Head of caudate nucleus (tissue), 42 donors: ENCODE measurements at regions of chr3 and their contacts with region 1.

Region 1: DNA sequence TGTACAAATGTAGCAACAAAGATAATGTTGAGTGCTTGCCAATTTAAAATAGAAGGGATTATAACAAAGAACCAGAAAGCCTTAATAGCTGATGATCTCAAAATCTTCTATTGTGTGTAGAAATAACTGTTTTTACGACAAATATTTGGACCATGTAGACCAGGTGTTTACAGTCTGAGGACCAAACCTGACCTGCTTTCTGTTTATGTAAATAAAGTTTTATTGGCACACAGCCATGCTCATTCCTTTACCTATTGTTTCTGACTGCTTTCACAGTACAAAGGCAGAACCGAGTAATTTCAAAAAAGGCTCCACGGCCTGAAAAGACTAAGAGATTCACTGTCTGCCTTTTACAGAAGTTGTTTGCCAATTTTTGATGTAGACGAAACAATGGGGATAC is 91.8 kb downstream of the GOLIM4 start:
- DNase-seq: no peak

Region 2: DNA sequence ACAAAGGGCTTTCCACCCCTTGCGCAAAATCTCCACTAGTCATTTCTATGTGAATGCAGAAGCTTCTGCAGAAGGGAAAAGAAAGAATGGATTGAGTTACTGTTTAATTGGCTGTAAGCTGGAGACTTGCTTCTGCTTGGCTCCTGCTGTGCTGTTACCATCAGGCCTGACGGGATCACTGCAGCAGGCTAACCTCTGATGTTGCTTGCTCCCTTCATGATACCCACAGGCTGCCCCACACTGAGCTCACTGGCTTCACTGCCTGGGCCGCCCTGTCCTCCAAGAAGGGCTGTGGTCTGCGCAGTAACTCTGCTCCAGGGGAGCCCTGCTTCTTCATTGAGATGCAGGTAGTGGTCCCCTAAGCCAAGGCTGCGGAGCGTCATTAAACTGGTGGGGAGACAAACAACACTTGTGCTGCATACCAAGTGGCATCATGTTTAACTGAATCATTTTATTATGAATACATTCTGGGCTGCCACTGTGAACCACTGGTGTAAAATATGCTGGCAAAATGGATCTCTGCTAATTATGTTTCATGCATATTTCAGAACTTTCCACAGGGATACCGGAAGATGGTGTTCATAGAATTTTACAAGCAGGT is 428.8 kb before region 1 on chr3:
- intact Hi-C with region 1: no loop called
- DNase-seq: peak in 30 of 42 donors; percentile 3 to 75 (median 21)

Region 3: GRCh38 chr3:167684388-167684993 is 319.4 kb before region 1 on chr3:
- intact Hi-C with region 1: no loop called
- DNase-seq: peak in 25 of 42 donors; percentile 10 to 87 (median 63)

Region 4: DNA sequence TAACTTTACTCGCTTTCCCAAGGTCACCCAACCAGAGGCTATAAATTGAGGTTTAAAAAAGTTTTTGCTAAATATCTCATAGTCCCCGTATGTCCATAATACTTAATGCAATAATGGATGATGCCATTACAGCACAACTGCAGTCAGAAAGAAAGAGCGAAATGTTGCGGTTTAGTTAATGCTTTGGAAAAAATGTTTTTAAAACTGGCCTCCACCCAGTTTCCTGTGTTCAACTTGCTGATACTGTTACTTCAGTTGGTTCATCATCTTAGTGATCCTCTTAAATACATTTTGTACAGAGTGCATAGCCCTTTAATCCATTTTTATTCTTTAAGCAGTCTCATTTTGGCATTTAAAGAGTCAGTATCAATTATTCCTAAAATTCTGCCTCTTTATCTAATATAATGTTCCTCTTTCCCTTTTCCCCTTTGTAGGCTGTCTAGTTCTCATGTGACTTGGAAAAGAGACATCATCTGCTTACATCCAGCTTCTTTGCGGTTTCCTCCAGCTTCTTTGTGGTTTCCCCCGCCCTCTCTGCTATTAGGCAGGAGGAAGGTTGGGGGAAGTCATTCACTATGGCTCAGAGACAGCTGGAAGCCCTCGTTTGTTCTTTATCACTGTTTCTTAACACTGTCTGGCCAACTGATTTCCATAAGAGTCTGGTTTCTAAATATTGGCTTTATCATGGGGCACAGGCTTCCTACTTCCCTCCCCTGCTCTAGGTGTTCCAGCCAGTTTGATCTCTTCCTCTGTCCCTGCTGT is 62.5 kb before region 1 on chr3:
- intact Hi-C with region 1: no loop called
- DNase-seq: peak in 4 of 42 donors; percentile 3 to 40 (median 7)

Region 5: GRCh38 chr3:168026764-168027163 is 22.9 kb after region 1 on chr3:
- intact Hi-C with region 1: loop called (anchors 2 kb)
- DNase-seq: no peak

Region 6: GRCh38 chr3:168155303-168155702 is 151.4 kb after region 1 on chr3:
- intact Hi-C with region 1: no loop called
- DNase-seq: no peak